ENCODE measurements at regions of chr6 and their contacts with region 1.

Region 1: DNA sequence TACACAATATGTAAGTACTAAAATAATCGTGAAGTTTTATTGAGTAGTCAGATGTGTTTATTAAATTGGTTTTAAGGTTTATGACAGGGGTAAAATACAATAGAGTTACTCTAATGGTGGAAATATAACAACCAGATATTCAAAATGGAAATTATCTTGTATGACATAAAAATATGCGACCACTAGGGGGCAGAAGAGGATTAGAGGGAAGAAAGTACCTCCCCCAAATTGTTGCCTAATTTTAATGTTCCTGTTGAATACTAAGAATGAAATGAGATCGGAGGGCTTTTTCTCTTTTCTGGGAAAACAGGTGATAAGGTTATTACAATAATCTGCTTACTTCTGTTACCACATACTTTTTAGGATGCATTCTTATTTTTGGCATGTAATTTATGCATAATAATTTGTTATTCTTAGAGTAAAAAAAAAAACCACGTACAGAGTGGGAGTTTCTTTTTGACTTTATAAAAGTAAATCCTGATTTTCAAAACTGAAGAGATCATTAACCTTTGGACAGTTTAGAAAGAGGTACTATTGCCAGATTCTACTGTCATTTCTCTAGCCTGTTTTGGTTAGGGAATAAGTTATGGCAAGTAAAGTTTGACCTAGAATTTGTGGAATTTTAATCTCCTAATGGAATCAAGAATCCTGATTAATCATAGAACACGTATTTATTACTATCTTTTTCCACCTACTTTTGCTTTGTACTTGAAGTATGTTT is 159.2 kb downstream of the CD109 start:
- DNase-seq: peak in 1 of 2 experiments; percentile 66
- H3K4me3 ChIP-seq: no peak overlapping the region
- H3K4me3 Mint-ChIP-seq: no peak overlapping the region
- H3K27ac Mint-ChIP-seq: no peak overlapping the region
- H3K4me1 ChIP-seq: no peaks in the 10 kb centered on the region
- H3K4me1 Mint-ChIP-seq: no peaks in the 10 kb centered on the region
- H3K27me3 ChIP-seq: no peaks in the 10 kb centered on the region
- H3K27me3 Mint-ChIP-seq: no peaks in the 10 kb centered on the region
- CTCF ChIP-seq: peak; percentile 46 to 64

Region 2: DNA sequence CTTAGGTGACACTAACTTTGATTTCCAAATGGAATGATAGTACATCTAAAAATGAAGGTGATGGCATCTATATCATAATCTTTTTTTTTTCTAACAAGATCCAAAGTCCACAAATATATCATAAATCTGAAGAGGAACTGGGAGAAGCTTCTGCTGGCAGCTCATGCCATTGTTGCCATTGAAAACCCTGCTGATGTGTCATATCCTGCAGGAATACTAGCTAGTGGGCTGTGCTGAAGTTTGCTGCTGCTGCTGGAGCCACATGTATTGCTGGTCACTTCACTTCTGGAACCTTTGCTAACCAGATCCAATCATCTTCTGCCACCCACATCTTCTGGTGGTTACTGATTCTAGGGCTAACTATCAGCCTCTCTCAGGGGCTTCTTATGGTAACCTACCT is 564.7 kb before region 1 on chr6:
- CTCF ChIA-PET with region 1: no interaction called
- POLR2A ChIA-PET with region 1: no interaction called
- intact Hi-C with region 1: no loop called
- DNase-seq: no peak
- H3K4me3 ChIP-seq: no peak overlapping the region
- H3K4me3 Mint-ChIP-seq: no peak overlapping the region
- H3K27ac Mint-ChIP-seq: no peak overlapping the region
- H3K4me1 ChIP-seq: 0 out of 2 replicates have a peak, but pooled peaks cover 8% of the 10 kb centered on the region
- H3K4me1 Mint-ChIP-seq: peaks cover 8% of the 10 kb centered on the region
- H3K27me3 ChIP-seq: no peaks in the 10 kb centered on the region
- H3K27me3 Mint-ChIP-seq: no peaks in the 10 kb centered on the region
- CTCF ChIP-seq: no peak

Region 3: DNA sequence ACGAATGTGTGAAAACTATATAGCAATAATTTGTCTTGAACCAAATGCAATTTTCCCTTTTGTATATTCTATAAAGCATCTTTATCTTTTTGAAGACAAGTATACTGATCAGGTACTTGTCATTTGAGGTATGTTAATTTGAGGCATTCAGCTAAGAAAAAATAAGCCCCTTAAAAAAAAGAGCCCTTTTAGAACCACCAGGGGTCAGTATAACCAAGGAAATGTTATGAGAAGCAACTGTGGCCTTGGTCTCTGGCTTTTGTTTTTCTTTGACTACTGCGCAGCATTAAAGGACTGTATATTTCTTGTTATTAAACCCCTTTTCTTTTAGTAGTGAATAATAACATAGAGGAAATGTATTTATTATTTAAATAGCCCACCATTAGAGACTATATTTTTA is 116.1 kb before region 1 on chr6:
- CTCF ChIA-PET with region 1: interaction called, 3 read pairs
- POLR2A ChIA-PET with region 1: interaction called, 3 read pairs
- intact Hi-C with region 1: loop called (anchors 2 kb)
- DNase-seq: peak in 1 of 2 experiments; percentile 56
- H3K4me3 ChIP-seq: no peak overlapping the region
- H3K4me3 Mint-ChIP-seq: no peak overlapping the region
- H3K27ac Mint-ChIP-seq: no peak overlapping the region
- H3K4me1 ChIP-seq: no peaks in the 10 kb centered on the region
- H3K4me1 Mint-ChIP-seq: no peaks in the 10 kb centered on the region
- H3K27me3 ChIP-seq: no peaks in the 10 kb centered on the region
- H3K27me3 Mint-ChIP-seq: peaks cover 3% of the 10 kb centered on the region
- CTCF ChIP-seq: peak; percentile 63 to 82

Region 4: DNA sequence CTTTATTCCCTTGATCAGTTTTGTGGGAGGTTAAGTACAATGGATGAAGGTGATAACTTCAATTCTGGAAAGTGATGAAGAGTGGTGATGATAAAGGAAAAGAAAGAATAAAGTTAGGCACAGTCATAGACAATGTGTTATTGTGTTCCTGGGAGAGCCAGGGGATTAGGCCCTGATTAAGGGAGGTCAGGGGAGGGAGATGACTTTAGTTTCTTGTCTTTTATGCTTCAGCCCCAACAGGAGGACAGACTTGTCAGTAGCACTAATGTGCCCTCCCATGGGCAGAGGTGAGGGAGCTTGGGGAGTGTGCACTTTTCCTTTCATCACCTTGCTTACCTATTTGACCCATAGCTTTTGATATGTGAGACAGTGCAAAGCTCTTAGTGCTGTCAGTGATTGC is 43.5 kb before region 1 on chr6:
- CTCF ChIA-PET with region 1: no interaction called
- POLR2A ChIA-PET with region 1: no interaction called
- intact Hi-C with region 1: no loop called
- DNase-seq: no peak
- H3K4me3 ChIP-seq: no peak overlapping the region
- H3K4me3 Mint-ChIP-seq: no peak overlapping the region
- H3K27ac Mint-ChIP-seq: no peak overlapping the region
- H3K4me1 ChIP-seq: no peaks in the 10 kb centered on the region
- H3K4me1 Mint-ChIP-seq: no peaks in the 10 kb centered on the region
- H3K27me3 ChIP-seq: no peaks in the 10 kb centered on the region; the same call in 1 of the 2 replicates
- H3K27me3 Mint-ChIP-seq: no peaks in the 10 kb centered on the region
- CTCF ChIP-seq: no peak

Region 5: GRCh38 chr6:73898624-73899023 is 43.5 kb after region 1 on chr6:
- CTCF ChIA-PET with region 1: no interaction called
- POLR2A ChIA-PET with region 1: no interaction called
- intact Hi-C with region 1: loop called (anchors 1 kb)
- DNase-seq: peak in 1 of 2 experiments; percentile 14
- H3K4me3 ChIP-seq: no peak overlapping the region
- H3K4me3 Mint-ChIP-seq: no peak overlapping the region
- H3K27ac Mint-ChIP-seq: no peak overlapping the region
- H3K4me1 ChIP-seq: no peaks in the 10 kb centered on the region
- H3K4me1 Mint-ChIP-seq: no peaks in the 10 kb centered on the region
- H3K27me3 ChIP-seq: no peaks in the 10 kb centered on the region
- H3K27me3 Mint-ChIP-seq: no peaks in the 10 kb centered on the region
- CTCF ChIP-seq: peak in 1 of 2 experiments; percentile 25

Region 6: GRCh38 chr6:73964241-73964854 is 109.2 kb after region 1 on chr6:
- CTCF ChIA-PET with region 1: no interaction called
- POLR2A ChIA-PET with region 1: no interaction called
- intact Hi-C with region 1: loop called (anchors 5 kb)
- DNase-seq: no peak
- H3K4me3 ChIP-seq: no peak overlapping the region
- H3K4me3 Mint-ChIP-seq: no peak overlapping the region
- H3K27ac Mint-ChIP-seq: no peak overlapping the region
- H3K4me1 ChIP-seq: no peaks in the 10 kb centered on the region
- H3K4me1 Mint-ChIP-seq: no peaks in the 10 kb centered on the region
- H3K27me3 ChIP-seq: no peaks in the 10 kb centered on the region
- H3K27me3 Mint-ChIP-seq: peaks cover 7% of the 10 kb centered on the region
- CTCF ChIP-seq: no peak

Region 7: GRCh38 chr6:74044417-74045096 is 189.4 kb after region 1 on chr6:
- CTCF ChIA-PET with region 1: no interaction called
- POLR2A ChIA-PET with region 1: no interaction called
- intact Hi-C with region 1: no loop called
- DNase-seq: no peak
- H3K4me3 ChIP-seq: no peak overlapping the region
- H3K4me3 Mint-ChIP-seq: no peak overlapping the region
- H3K27ac Mint-ChIP-seq: no peak overlapping the region
- H3K4me1 ChIP-seq: peaks cover 20% of the 10 kb centered on the region
- H3K4me1 Mint-ChIP-seq: peaks cover 13% of the 10 kb centered on the region
- H3K27me3 ChIP-seq: no peaks in the 10 kb centered on the region
- H3K27me3 Mint-ChIP-seq: no peaks in the 10 kb centered on the region
- CTCF ChIP-seq: no peak